ENCODE measurements at regions of chr5 and their contacts with region 1.

Region 1: GRCh38 chr5:99674101-99674500 is 745.3 kb upstream of the CHD1 start:
- DNase-seq: no peak
- ATAC-seq: no peak
- H3K4me3 ChIP-seq: no peak overlapping the region
- H3K27ac ChIP-seq: no peak overlapping the region
- H3K4me1 ChIP-seq: no peaks in the 10 kb centered on the region
- H3K27me3 ChIP-seq: no peaks in the 10 kb centered on the region
- CTCF ChIP-seq: no peak
- EP300 ChIP-seq: no peak
- POLR2A ChIP-seq: no peak
- RAD21 ChIP-seq: no peak

Region 2: GRCh38 chr5:98296426-98296825 is 1377.7 kb before region 1 on chr5:
- CTCF ChIA-PET with region 1: no interaction called
- POLR2A ChIA-PET with region 1: no interaction called
- in situ Hi-C with region 1: loop called (anchors 25 kb)
- intact Hi-C with region 1: no loop called
- DNase-seq: no peak
- ATAC-seq: no peak
- H3K4me3 ChIP-seq: no peak overlapping the region
- H3K27ac ChIP-seq: no peak overlapping the region
- H3K4me1 ChIP-seq: no peaks in the 10 kb centered on the region
- H3K27me3 ChIP-seq: no peaks in the 10 kb centered on the region
- CTCF ChIP-seq: no peak
- EP300 ChIP-seq: no peak
- POLR2A ChIP-seq: no peak
- RAD21 ChIP-seq: no peak